ENCODE measurements at regions of chr15 and their contacts with region 1.

Region 1: GRCh38 chr15:36579792-36580431 is 486 bp downstream of the CDIN1 start:
- DNase-seq: peak in 1 of 2 donors; percentile 68
- H3K4me3 ChIP-seq: peak overlapping the region; percentile 70 to 76
- H3K27ac ChIP-seq: peak overlapping the region; percentile 84 to 89
- H3K4me1 ChIP-seq: peaks cover 0 to 55% (median 24%) of the 10 kb centered on the region in 4 donors
- H3K27me3 ChIP-seq: no peaks in the 10 kb centered on the region
- CTCF ChIP-seq: no peak

Region 2: DNA sequence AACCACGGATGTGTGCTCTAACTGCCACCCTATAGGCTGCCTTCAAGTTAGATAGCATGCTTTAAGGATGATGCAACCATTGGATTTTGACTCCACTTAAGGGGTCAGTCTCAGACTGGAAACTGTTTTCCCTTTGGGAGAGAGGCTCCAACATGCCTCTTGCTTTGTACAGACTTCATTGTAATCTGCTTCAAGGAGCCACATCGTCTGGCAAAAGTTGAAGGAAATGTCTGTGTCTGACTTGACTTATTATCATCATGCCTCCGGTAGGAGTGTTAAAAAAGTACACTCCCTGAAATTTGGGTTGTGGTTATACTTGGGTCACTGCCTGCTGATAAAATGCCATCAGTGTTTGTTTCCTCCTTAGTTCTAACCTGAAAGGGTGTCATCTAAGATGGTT is 245.9 kb before region 1 on chr15:
- intact Hi-C with region 1: no loop called
- DNase-seq: no peak
- H3K4me3 ChIP-seq: no peak overlapping the region
- H3K27ac ChIP-seq: no peak overlapping the region
- H3K4me1 ChIP-seq: peaks cover 0 to 6% (median 0%) of the 10 kb centered on the region in 4 donors
- H3K27me3 ChIP-seq: no peaks in the 10 kb centered on the region
- CTCF ChIP-seq: no peak

Region 3: DNA sequence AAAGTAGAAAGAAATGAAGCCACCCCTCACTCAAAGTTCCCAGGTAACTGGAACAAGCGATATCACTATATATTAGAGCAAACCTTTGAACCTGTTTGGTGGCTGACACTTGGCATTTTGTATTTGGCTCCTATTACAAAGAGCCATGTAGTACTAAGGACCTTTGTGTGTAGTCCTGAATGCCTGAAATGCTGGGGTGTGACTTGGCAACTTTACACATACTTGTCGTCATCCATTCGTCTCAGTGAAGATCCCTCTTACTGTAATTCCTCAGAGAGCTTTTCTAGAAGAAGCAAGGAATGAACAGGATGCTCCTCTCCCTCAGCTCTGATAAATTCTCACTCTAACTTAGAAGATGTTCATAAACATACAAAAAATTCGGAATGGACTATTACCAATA is 216.6 kb before region 1 on chr15:
- intact Hi-C with region 1: loop called (anchors 5 kb)
- DNase-seq: no peak
- H3K4me3 ChIP-seq: no peak overlapping the region
- H3K27ac ChIP-seq: no peak overlapping the region
- H3K4me1 ChIP-seq: peaks cover 0 to 27% (median 12%) of the 10 kb centered on the region in 4 donors
- H3K27me3 ChIP-seq: no peaks in the 10 kb centered on the region
- CTCF ChIP-seq: no peak

Region 4: DNA sequence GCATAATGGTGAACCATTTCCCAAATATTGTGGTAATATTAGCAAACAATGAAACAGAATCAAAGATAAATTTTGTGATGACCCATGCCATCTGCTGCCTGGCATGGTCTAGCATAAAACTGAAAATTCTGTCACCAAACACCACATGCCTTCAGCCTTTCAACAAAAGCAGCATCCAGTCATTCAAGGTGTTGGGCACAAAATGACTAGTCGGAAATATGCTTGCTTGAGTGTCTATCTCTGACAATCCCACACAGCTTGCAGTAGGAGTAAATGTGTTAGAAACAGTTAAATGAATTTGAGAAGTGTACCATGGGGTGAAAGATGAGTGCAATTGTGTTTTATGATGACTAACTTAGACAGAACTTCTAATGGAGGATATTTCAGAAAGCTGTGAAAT is 62.2 kb before region 1 on chr15:
- intact Hi-C with region 1: no loop called
- DNase-seq: no peak
- H3K4me3 ChIP-seq: no peak overlapping the region
- H3K27ac ChIP-seq: no peak overlapping the region
- H3K4me1 ChIP-seq: no peaks in the 10 kb centered on the region
- H3K27me3 ChIP-seq: no peaks in the 10 kb centered on the region
- CTCF ChIP-seq: no peak

Measured in tibial artery (tissue), 4 donors.